T-cell (primary cell): ENCODE measurements at regions of chr2 and their contacts with region 1.

Region 1: DNA sequence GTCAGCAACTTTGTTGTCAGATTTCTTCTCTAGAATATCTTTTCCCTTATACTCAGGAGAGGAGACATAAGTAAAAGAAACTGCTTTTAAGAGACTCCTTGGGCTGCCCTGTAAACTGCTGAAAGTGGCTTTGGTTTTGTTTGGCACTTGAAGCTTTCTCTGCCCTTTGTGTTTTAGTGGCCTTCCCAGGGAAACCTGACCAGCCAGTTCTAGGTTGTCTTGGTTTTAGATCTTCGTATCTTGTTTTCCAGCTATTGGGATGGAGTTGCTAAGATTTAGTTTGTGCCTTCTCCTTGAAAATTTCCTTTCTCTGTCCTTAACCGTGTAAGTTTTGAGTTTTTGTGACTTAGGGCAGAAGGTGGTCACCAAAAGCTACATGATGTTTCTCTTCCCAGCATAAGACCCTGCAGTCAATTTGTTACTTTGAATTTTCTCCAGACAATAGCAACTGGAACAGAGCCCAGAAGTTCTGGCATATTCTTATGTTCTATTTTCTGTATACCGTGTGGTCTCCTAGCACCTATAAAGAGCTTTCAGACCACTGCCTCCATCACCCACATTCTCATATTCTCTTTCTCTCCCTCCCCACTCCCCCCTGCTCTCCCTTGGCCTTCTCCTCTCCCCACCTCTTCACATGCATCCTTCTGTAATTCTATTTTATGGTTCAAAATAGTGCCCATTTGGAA is 81.1 kb downstream of the BOLA3 start:
- DNase-seq: no peak
- ATAC-seq: no peak
- H3K4me3 ChIP-seq: no peak overlapping the region
- H3K4me3 Mint-ChIP-seq: no peak overlapping the region
- H3K27ac ChIP-seq: no peak overlapping the region
- H3K27ac Mint-ChIP-seq: peak overlapping the region in 1 of 2 donors; percentile 13
- H3K4me1 ChIP-seq: no peaks in the 10 kb centered on the region
- H3K4me1 Mint-ChIP-seq: peaks cover 24 to 32% (median 32%) of the 10 kb centered on the region in 3 donors
- H3K27me3 ChIP-seq: no peaks in the 10 kb centered on the region
- H3K27me3 Mint-ChIP-seq: no peaks in the 10 kb centered on the region

Region 2: GRCh38 chr2:74052732-74053597 is 13.7 kb before region 1 on chr2:
- CTCF ChIA-PET with region 1: interaction called in 1 of 2 experiments, 3 read pairs
- POLR2A ChIA-PET with region 1: interaction called in 1 of 2 experiments, 12 read pairs
- DNase-seq: peak in 27 of 35 experiments; percentile 4 to 63 (median 24)
- ATAC-seq: peak; percentile 95 to 99 (median 99)
- H3K4me3 ChIP-seq: no peak overlapping the region
- H3K4me3 Mint-ChIP-seq: peak overlapping the region; percentile 35 to 70 (median 48)
- H3K27ac ChIP-seq: no peak overlapping the region
- H3K27ac Mint-ChIP-seq: peak overlapping the region; percentile 83 to 85
- H3K4me1 ChIP-seq: peaks cover 15 to 16% of the 10 kb centered on the region in 2 experiments
- H3K4me1 Mint-ChIP-seq: peaks cover 45 to 71% (median 48%) of the 10 kb centered on the region in 3 donors
- H3K27me3 ChIP-seq: no peaks in the 10 kb centered on the region
- H3K27me3 Mint-ChIP-seq: no peaks in the 10 kb centered on the region

Region 3: GRCh38 chr2:74080346-74080745 is 13.7 kb after region 1 on chr2:
- CTCF ChIA-PET with region 1: no interaction called
- POLR2A ChIA-PET with region 1: no interaction called
- DNase-seq: no peak
- ATAC-seq: no peak
- H3K4me3 ChIP-seq: no peak overlapping the region
- H3K4me3 Mint-ChIP-seq: no peak overlapping the region
- H3K27ac ChIP-seq: no peak overlapping the region
- H3K27ac Mint-ChIP-seq: no peak overlapping the region
- H3K4me1 ChIP-seq: no peaks in the 10 kb centered on the region
- H3K4me1 Mint-ChIP-seq: peaks cover 0 to 6% (median 0%) of the 10 kb centered on the region in 3 donors
- H3K27me3 ChIP-seq: no peaks in the 10 kb centered on the region
- H3K27me3 Mint-ChIP-seq: no peaks in the 10 kb centered on the region